Activated naive CD4-positive, alpha-beta T cell treated with anti-CD3 and anti-CD28 coated beads for 36 hours (primary cell): ENCODE measurements at regions of chr19 and their contacts with region 1.

Region 1: DNA sequence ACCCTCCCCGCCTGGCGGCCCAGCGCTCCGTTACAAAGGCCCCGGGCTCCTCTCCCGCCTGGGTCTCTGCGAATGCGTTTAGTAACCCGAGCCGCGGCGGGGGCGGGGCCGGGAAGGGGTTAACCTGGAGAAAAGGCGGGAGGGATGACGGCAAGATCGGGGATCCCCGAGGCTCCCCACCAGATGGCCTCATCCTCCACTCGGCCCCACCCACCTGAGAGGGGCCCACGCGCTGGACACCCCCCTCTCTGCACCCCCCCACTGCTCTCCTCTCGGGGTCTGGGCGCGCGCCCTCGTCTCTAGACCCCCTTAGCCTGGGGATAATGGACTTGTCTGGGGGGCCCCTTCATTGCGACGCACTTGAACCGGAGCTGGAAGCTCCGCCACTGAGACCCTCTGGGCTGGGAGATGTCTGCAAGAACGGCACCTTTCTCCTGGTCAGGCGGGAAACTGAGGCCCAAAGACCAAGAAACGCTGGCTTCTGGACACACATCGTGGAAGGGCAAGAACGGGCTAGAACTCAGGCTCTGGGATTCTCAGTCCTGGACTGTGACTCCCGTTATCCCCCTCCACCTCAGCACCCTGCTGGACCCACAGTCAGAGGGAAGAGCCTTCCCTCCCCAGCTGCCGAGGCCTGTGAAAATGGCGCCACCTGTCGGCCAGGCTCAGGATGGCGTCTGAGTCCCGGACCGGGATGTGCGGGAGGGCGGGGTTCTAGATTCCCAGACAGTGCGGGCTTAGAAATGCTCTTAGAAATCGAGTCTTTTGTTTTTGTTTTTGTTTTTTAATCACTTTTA is 2.9 kb upstream of the LTBP4 start:
- DNase-seq: peak; percentile 91
- H3K4me3 Mint-ChIP-seq: peak overlapping the region; percentile 12
- H3K27ac Mint-ChIP-seq: no peak overlapping the region
- H3K4me1 Mint-ChIP-seq: peaks cover 50% of the 10 kb centered on the region
- H3K27me3 Mint-ChIP-seq: peaks cover 41% of the 10 kb centered on the region

Region 2: GRCh38 chr19:40305403-40305802 is 292.9 kb before region 1 on chr19:
- CTCF ChIA-PET with region 1: interaction called, 4 read pairs
- intact Hi-C with region 1: loop called (anchors 1 kb)
- DNase-seq: peak; percentile 90
- H3K4me3 Mint-ChIP-seq: no peak overlapping the region
- H3K27ac Mint-ChIP-seq: no peak overlapping the region
- H3K4me1 Mint-ChIP-seq: peaks cover 2% of the 10 kb centered on the region
- H3K27me3 Mint-ChIP-seq: no peaks in the 10 kb centered on the region

Region 3: GRCh38 chr19:40529093-40529954 is 69.0 kb before region 1 on chr19:
- CTCF ChIA-PET with region 1: interaction called, 5 read pairs
- intact Hi-C with region 1: loop called (anchors 1 kb)
- DNase-seq: peak; percentile 92
- H3K4me3 Mint-ChIP-seq: peak overlapping the region; percentile 43
- H3K27ac Mint-ChIP-seq: no peak overlapping the region
- H3K4me1 Mint-ChIP-seq: peaks cover 10% of the 10 kb centered on the region
- H3K27me3 Mint-ChIP-seq: peaks cover 13% of the 10 kb centered on the region

Region 4: GRCh38 chr19:40542202-40542859 is 56.0 kb before region 1 on chr19:
- CTCF ChIA-PET with region 1: interaction called, 23 read pairs
- intact Hi-C with region 1: loop called (anchors 2 kb)
- DNase-seq: no peak
- H3K4me3 Mint-ChIP-seq: no peak overlapping the region
- H3K27ac Mint-ChIP-seq: no peak overlapping the region
- H3K4me1 Mint-ChIP-seq: no peaks in the 10 kb centered on the region
- H3K27me3 Mint-ChIP-seq: peaks cover 6% of the 10 kb centered on the region

Region 5: GRCh38 chr19:40549007-40549708 is 49.2 kb before region 1 on chr19:
- CTCF ChIA-PET with region 1: interaction called, 23 read pairs
- intact Hi-C with region 1: loop called (anchors 1 kb)
- DNase-seq: peak; percentile 80
- H3K4me3 Mint-ChIP-seq: peak overlapping the region; percentile 0
- H3K27ac Mint-ChIP-seq: no peak overlapping the region
- H3K4me1 Mint-ChIP-seq: peaks cover 10% of the 10 kb centered on the region
- H3K27me3 Mint-ChIP-seq: peaks cover 41% of the 10 kb centered on the region